ENCODE measurements at regions of chr12 and their contacts with region 1.

Region 1: GRCh38 chr12:95918194-95918993 is 24.0 kb downstream of the CCDC38 start:
- DNase-seq: peak in 7 of 9 donors; percentile 28 to 67 (median 59)
- ATAC-seq: peak; percentile 97
- H3K4me3 ChIP-seq: no peak overlapping the region
- H3K4me3 Mint-ChIP-seq: no peak overlapping the region
- H3K27ac ChIP-seq: no peak overlapping the region
- H3K27ac Mint-ChIP-seq: no peak overlapping the region
- H3K4me1 ChIP-seq: no peaks in the 10 kb centered on the region
- H3K4me1 Mint-ChIP-seq: peaks cover 0 to 2% (median 0%) of the 10 kb centered on the region in 7 donors
- H3K27me3 ChIP-seq: no peaks in the 10 kb centered on the region
- H3K27me3 Mint-ChIP-seq: peaks cover 0 to 15% (median 5%) of the 10 kb centered on the region in 5 donors

Region 2: GRCh38 chr12:95701722-95702418 is 216.5 kb before region 1 on chr12:
- CTCF ChIA-PET with region 1: no interaction called
- POLR2A ChIA-PET with region 1: no interaction called
- intact Hi-C with region 1: no loop called
- DNase-seq: no peak
- ATAC-seq: no peak
- H3K4me3 ChIP-seq: no peak overlapping the region
- H3K4me3 Mint-ChIP-seq: no peak overlapping the region
- H3K27ac ChIP-seq: no peak overlapping the region
- H3K27ac Mint-ChIP-seq: no peak overlapping the region
- H3K4me1 ChIP-seq: no peaks in the 10 kb centered on the region
- H3K4me1 Mint-ChIP-seq: no peaks in the 10 kb centered on the region
- H3K27me3 ChIP-seq: no peaks in the 10 kb centered on the region
- H3K27me3 Mint-ChIP-seq: peaks cover 0 to 25% (median 10%) of the 10 kb centered on the region in 5 donors

Region 3: DNA sequence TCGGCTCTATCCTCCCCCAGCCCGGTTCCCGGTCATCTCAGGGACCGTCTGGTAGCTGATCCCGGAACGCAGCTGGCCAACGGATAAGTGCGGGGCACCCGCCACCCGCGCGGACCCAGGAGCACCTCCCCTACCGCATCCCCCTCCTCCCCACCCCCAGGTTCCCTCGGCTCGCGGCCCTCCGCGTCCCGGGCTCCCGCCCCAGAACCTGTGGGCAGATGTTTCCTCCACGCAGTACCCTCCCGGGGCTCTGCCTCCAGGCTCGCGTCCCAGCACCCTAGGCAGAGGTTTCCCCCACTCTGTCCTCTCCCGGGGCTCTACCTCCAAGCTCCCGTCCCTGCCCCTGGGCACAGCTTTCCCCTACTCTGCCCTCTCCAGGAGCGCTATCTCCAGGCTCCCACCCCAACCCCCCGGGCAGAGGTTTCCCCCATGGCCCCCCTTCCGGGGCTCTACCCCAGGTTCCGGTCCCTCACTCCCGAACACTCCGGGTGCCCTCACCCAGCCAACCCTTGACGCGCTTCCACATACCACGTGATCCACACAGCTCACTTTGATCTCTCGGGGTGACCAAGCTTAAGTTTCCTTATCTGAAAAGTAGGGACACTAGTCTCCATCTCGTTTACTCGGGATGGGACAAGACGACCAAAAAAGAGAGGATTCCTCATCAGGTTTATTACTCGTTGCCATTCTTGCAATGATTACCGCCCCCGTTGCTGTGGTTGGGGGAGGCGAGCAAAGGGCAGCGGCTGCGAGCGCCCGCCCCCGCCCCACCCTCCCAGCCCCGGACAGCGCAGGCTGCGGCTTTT is 24.3 kb after region 1 on chr12 and contains the start of gene CCDC38:
- CTCF ChIA-PET with region 1: interaction called, 4 read pairs
- POLR2A ChIA-PET with region 1: interaction called, 5 read pairs
- intact Hi-C with region 1: loop called in 1 of 2 experiments (anchors 2 kb)
- DNase-seq: peak; percentile 56 to 86 (median 82)
- ATAC-seq: peak; percentile 97
- H3K4me3 ChIP-seq: peak within 1 kb of the TSS; percentile 93
- H3K4me3 Mint-ChIP-seq: peak within 1 kb of the TSS; percentile 88 to 99 (median 96)
- H3K27ac ChIP-seq: peak within 1 kb of the TSS; percentile 86
- H3K27ac Mint-ChIP-seq: peak within 1 kb of the TSS; percentile 85 to 97 (median 89)
- H3K4me1 ChIP-seq: peaks cover 6% of the 10 kb centered on the region in 2 donors
- H3K4me1 Mint-ChIP-seq: peaks cover 4 to 12% (median 10%) of the 10 kb centered on the region in 7 donors
- H3K27me3 ChIP-seq: no peaks in the 10 kb centered on the region
- H3K27me3 Mint-ChIP-seq: peaks cover 0 to 26% (median 0%) of the 10 kb centered on the region in 5 donors
- total RNA-seq, gene CCDC38: 0.07 to 0.27 TPM in 2 of 5 experiments, not detected in the others

Region 4: GRCh38 chr12:95959107-95959506 is 40.7 kb after region 1 on chr12:
- CTCF ChIA-PET with region 1: interaction called, 4 read pairs
- POLR2A ChIA-PET with region 1: no interaction called
- intact Hi-C with region 1: loop called in 1 of 2 experiments (anchors 1 kb)
- DNase-seq: no peak
- ATAC-seq: no peak
- H3K4me3 ChIP-seq: no peak overlapping the region
- H3K4me3 Mint-ChIP-seq: no peak overlapping the region
- H3K27ac ChIP-seq: no peak overlapping the region
- H3K27ac Mint-ChIP-seq: no peak overlapping the region
- H3K4me1 ChIP-seq: no peaks in the 10 kb centered on the region
- H3K4me1 Mint-ChIP-seq: peaks cover 0 to under 1% (median 0%) of the 10 kb centered on the region in 7 donors
- H3K27me3 ChIP-seq: no peaks in the 10 kb centered on the region
- H3K27me3 Mint-ChIP-seq: peaks cover 0 to 4% (median 0%) of the 10 kb centered on the region in 5 donors

Region 5: GRCh38 chr12:96103067-96103644 is 184.8 kb after region 1 on chr12:
- CTCF ChIA-PET with region 1: no interaction called
- POLR2A ChIA-PET with region 1: no interaction called
- intact Hi-C with region 1: no loop called
- DNase-seq: no peak
- ATAC-seq: no peak
- H3K4me3 ChIP-seq: no peak overlapping the region
- H3K4me3 Mint-ChIP-seq: no peak overlapping the region
- H3K27ac ChIP-seq: no peak overlapping the region
- H3K27ac Mint-ChIP-seq: no peak overlapping the region
- H3K4me1 ChIP-seq: peaks cover 0 to 31% of the 10 kb centered on the region in 2 donors
- H3K4me1 Mint-ChIP-seq: peaks cover 11 to 51% (median 42%) of the 10 kb centered on the region in 7 donors
- H3K27me3 ChIP-seq: no peaks in the 10 kb centered on the region
- H3K27me3 Mint-ChIP-seq: no peaks in the 10 kb centered on the region

Region 6: DNA sequence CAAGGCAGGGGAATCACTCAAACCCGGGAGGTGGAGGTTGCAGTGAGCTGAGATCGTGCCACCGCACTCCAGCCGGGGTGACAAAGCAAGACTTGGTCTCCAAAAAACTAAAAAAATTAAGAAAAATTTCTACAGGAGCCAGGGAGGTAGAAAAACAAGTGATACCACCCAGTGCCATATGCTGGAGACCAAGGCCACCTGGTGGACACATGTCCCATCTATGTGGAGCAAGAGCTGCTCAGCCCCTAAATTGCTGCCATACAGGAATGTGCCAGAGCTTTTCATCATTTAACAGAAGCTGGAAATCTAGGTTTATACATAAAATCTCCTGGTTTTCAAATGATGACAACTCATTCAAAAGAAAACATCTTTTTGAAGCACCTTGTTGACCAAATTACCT is 214.4 kb after region 1 on chr12:
- CTCF ChIA-PET with region 1: no interaction called
- POLR2A ChIA-PET with region 1: no interaction called
- intact Hi-C with region 1: loop called in 1 of 2 experiments (anchors 2 kb)
- DNase-seq: peak in 4 of 9 donors; percentile 9 to 33 (median 24)
- ATAC-seq: no peak
- H3K4me3 ChIP-seq: no peak overlapping the region
- H3K4me3 Mint-ChIP-seq: no peak overlapping the region
- H3K27ac ChIP-seq: no peak overlapping the region
- H3K27ac Mint-ChIP-seq: no peak overlapping the region
- H3K4me1 ChIP-seq: no peaks in the 10 kb centered on the region
- H3K4me1 Mint-ChIP-seq: peaks cover 2 to 14% (median 10%) of the 10 kb centered on the region in 7 donors
- H3K27me3 ChIP-seq: peaks cover 0 to 5% of the 10 kb centered on the region in 2 donors
- H3K27me3 Mint-ChIP-seq: peaks cover 0 to 17% (median 0%) of the 10 kb centered on the region in 5 donors

Measured in naive thymus-derived CD4-positive, alpha-beta T cell (primary cell).